ENCODE measurements at regions of chr21 and their contacts with region 1.

Region 1: GRCh38 chr21:41678944-41679343 is 87.9 kb downstream of the RIPK4 start:
- DNase-seq: peak; percentile 100
- H3K4me3 Mint-ChIP-seq: peak overlapping the region; percentile 60
- H3K27ac Mint-ChIP-seq: peak overlapping the region; percentile 87
- H3K4me1 Mint-ChIP-seq: peaks cover 36% of the 10 kb centered on the region
- H3K27me3 Mint-ChIP-seq: no peaks in the 10 kb centered on the region
- CTCF ChIP-seq: no peak

Region 2: DNA sequence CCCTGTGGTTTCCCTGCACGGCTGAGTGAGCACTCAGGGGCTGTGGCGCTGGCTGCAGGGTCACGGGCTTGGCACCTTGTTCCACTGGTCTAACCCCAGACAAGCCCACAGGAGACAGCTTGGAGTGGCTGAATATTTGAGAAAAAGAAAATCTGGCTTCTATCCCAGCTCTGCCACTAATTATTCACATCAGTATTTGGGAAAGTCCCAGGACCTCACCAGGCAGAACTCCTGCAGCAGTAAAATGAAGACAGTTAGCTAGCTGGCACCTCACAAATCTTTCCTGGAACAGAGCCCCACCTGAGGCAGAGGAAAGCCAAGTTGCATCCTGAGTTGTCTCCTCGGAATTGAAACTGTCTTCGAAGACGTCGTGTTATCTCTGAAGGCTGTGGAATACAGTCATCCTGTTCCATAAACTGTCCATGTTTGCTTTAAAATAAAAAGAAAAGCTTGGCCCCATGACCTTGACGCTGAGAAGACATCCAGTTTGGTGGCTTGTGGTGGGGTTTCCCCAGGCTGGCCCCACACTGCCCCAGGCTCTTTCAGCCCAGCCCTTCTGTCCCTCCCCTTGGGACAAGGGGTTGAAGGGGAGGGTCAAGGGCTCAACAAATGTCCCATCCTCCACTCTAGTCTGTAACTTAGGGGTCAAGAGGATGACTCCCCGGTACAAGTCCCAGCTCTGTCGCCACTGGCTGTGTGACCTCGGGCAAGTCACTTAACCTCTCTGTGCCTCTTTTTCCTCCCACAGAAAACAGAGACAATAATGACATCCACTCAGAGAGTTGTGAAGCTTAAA is 77.2 kb before region 1 on chr21:
- CTCF ChIA-PET with region 1: no interaction called
- POLR2A ChIA-PET with region 1: no interaction called
- intact Hi-C with region 1: no loop called
- DNase-seq: peak; percentile 37
- H3K4me3 Mint-ChIP-seq: no peak overlapping the region
- H3K27ac Mint-ChIP-seq: peak overlapping the region; percentile 61
- H3K4me1 Mint-ChIP-seq: peaks cover 6% of the 10 kb centered on the region
- H3K27me3 Mint-ChIP-seq: peaks cover 12% of the 10 kb centered on the region
- CTCF ChIP-seq: no peak

Region 3: DNA sequence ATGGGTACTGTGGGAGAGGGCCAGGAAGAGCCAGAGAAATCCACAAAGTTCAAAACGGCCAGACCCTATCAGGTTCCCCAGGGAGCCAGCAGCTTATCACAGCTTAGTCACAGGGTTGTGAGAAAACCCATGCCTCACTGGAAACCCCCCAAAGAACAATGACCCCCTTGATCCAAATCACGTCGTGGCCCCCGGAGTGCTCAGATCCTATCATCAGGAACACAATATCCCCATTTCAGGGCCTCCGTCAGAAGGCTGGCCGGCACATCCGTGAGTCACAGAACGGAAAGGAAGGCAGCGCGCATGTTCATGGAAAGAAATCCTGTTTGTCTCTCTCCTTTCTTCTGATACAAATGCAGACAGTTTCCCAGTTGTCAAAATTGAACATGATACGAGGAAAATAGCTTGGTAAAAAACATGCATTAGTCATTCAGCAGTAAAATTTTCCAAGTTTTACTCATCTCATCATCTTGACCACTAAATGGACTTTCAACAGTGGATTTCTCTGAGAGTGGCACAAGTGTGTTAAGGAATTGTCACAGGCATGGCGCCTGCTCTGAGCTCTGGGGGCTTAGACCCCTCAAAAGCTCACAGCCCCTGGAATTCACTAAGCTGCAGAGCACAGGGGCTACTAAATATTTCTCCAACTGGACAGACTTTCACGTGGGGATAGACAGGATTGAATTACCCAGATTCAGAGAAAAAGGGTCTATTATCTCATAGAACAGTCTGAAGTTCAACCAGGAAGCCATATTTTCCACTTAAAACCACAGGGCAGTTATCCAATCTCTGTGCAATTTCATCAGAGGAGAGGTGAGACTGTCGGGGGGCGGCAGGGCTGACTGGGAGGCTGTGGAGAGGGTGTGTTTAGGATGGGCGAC is 36.9 kb before region 1 on chr21:
- CTCF ChIA-PET with region 1: interaction called, 3 read pairs
- POLR2A ChIA-PET with region 1: interaction called, 21 read pairs
- intact Hi-C with region 1: no loop called
- DNase-seq: peak; percentile 80
- H3K4me3 Mint-ChIP-seq: no peak overlapping the region
- H3K27ac Mint-ChIP-seq: peak overlapping the region; percentile 93
- H3K4me1 Mint-ChIP-seq: peaks cover 50% of the 10 kb centered on the region
- H3K27me3 Mint-ChIP-seq: no peaks in the 10 kb centered on the region
- CTCF ChIP-seq: no peak

Region 4: GRCh38 chr21:41653954-41654491 is 24.9 kb before region 1 on chr21:
- CTCF ChIA-PET with region 1: interaction called, 4 read pairs
- POLR2A ChIA-PET with region 1: interaction called, 34 read pairs
- intact Hi-C with region 1: no loop called
- DNase-seq: peak; percentile 74
- H3K4me3 Mint-ChIP-seq: peak overlapping the region; percentile 39
- H3K27ac Mint-ChIP-seq: peak overlapping the region; percentile 64
- H3K4me1 Mint-ChIP-seq: peaks cover 37% of the 10 kb centered on the region
- H3K27me3 Mint-ChIP-seq: no peaks in the 10 kb centered on the region
- CTCF ChIP-seq: no peak

Region 5: GRCh38 chr21:41715649-41716281 is 36.8 kb after region 1 on chr21:
- CTCF ChIA-PET with region 1: interaction called, 3 read pairs
- POLR2A ChIA-PET with region 1: interaction called, 22 read pairs
- intact Hi-C with region 1: no loop called
- DNase-seq: peak; percentile 69
- H3K4me3 Mint-ChIP-seq: no peak overlapping the region
- H3K27ac Mint-ChIP-seq: peak overlapping the region; percentile 87
- H3K4me1 Mint-ChIP-seq: peaks cover 23% of the 10 kb centered on the region
- H3K27me3 Mint-ChIP-seq: no peaks in the 10 kb centered on the region
- CTCF ChIP-seq: no peak

Region 6: GRCh38 chr21:41752231-41752681 is 73.3 kb after region 1 on chr21:
- CTCF ChIA-PET with region 1: interaction called, 3 read pairs
- POLR2A ChIA-PET with region 1: interaction called, 21 read pairs
- intact Hi-C with region 1: no loop called
- DNase-seq: peak; percentile 84
- H3K4me3 Mint-ChIP-seq: peak overlapping the region; percentile 64
- H3K27ac Mint-ChIP-seq: peak overlapping the region; percentile 87
- H3K4me1 Mint-ChIP-seq: peaks cover 32% of the 10 kb centered on the region
- H3K27me3 Mint-ChIP-seq: no peaks in the 10 kb centered on the region
- CTCF ChIP-seq: no peak

Region 7: DNA sequence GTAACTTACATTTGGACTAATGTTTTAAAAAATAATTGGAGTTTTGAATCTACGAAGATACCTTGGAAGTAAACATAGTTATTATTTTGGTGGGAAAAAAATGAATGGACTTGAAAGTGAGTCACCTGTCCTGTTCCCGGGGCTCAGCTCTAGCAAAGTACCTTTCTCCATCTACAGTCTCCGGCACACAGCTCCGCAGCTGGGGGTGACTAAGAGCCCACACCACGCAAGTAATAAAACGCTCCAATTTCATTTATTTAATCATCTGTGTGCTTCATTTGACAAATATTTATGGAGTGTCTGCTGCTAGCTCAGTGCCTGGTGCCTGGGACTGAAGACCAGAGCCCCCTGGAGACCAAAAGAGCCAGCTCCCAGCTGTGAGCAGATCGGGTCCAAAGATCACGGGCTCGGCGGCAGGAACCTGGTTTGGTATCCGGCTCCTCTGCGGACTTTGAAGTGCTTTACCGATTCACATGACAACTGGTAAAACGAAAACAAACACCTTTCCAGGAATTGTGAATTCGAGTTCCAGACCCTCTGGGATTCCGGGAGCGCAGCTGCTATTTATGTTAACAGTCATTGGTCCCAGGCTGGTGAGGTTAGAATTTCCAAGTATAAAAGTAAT is 89.6 kb after region 1 on chr21:
- CTCF ChIA-PET with region 1: interaction called, 11 read pairs
- POLR2A ChIA-PET with region 1: interaction called, 131 read pairs
- intact Hi-C with region 1: loop called (anchors 2 kb)
- DNase-seq: peak; percentile 72
- H3K4me3 Mint-ChIP-seq: peak overlapping the region; percentile 87
- H3K27ac Mint-ChIP-seq: peak overlapping the region; percentile 87
- H3K4me1 Mint-ChIP-seq: peaks cover 25% of the 10 kb centered on the region
- H3K27me3 Mint-ChIP-seq: no peaks in the 10 kb centered on the region
- CTCF ChIP-seq: peak; percentile 28